ENCODE measurements at regions of chr10 and their contacts with region 1.

Region 1: DNA sequence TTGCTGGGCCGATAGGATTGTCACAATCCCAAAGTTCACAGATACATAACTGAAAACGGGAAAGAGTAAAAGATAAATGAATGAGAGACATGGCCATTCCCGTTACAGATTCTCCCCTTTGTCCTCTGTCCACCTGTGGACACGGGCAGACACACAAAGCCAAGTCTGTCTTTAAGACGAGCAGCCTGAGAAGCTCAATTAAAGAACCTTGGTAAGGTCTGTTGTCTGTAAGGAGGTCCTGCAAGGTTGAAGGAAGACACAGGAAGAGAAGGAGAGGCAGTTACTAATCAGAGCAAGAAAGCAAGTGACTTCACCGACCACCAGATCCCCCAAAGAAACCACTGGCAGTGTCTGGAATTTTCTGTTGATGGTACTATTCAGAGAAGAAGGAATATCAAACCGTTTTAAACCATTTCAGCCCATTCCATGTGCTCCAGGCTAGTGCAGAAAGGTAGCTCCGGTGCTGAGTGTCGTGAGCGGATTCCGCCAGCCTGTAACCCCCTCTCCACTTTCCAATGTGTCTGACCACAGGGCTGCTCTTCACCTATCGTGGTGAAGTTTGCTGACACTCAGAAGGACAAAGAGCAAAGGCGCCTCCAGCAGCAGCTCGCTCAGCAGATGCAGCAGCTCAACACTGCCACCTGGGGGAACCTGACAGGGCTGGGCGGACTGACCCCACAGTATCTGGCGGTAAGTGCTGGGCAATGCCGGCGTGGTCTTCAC is 252.6 kb downstream of the CELF2 start:
- DNase-seq: peak; percentile 88

Region 2: DNA sequence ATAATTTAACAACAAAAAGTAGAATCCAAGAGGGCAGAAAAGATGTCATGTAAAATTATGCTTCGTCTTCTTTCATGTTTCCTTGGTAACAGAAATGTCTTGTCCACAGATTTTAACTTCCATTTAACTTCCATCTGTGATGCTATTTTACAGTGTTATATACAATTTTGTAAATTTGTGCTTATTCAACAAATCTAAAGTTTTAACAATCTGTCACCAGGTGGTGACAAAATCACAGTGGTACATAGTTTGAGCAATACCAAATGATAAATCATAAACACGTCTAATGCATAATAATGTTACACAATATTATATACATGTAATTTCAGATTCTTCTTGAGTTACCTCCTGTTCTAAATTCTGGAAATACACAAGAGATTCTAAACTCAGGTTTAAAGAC is 1037.1 kb before region 1 on chr10:
- intact Hi-C with region 1: loop called (anchors 10 kb)
- DNase-seq: no peak

Region 3: GRCh38 chr10:10959666-10960065 is 310.6 kb before region 1 on chr10:
- intact Hi-C with region 1: loop called (anchors 5 kb)
- DNase-seq: no peak

Measured in cardiac septum (tissue), 1 donor.